SK-N-SH (cell line): ENCODE measurements at regions of chr20 and their contacts with region 1.

Region 1: DNA sequence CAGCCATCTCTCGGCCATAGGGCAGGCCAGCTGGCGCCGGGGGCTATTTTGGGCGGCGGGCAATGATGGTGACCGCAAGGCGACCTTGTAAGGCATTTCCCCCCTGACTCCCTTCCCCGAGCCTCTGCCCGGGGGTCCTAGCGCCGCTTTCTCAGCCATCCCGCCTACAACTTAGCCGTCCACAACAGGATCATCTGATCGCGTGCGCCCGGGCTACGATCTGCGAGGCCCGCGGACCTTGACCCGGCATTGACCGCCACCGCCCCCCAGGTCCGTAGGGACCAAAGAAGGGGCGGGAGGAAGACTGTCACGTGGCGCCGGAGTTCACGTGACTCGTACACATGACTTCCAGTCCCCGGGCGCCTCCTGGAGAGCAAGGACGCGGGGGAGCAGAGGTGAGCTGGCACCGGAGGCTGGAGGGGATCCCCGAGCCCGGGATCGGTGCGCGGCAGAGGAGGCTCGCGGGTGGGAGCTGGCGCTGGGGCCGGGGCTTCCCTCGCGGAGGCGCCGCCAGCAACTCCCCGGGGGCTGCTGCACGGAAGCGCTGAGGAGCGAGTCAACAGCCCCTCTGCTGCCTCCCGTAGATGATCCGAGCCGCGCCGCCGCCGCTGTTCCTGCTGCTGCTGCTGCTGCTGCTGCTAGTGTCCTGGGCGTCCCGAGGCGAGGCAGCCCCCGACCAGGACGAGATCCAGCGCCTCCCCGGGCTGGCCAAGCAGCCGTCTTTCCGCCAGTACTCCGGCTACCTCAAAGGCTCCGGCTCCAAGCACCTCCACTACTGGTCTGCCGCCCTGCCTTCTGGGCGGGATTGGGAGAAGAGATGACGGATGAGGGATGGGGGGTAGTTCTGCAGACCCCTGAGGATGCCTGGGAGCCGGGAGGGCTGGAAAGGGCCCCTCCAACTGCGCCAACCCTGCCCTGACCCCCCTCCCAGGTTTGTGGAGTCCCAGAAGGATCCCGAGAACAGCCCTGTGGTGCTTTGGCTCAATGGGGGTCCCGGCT is at the starts of genes CTSA and NEURL2:
- DNase-seq: peak; percentile 99
- H3K4me3 ChIP-seq: peak within 1 kb of the TSS; percentile 78 to 90
- H3K27ac ChIP-seq: peak within 1 kb of the TSS; percentile 58 to 89
- H3K4me1 ChIP-seq: peaks cover 0 to 9% of the 10 kb centered on the region in 2 experiments; a peak in 2 of 4 replicates
- H3K27me3 ChIP-seq: no peaks in the 10 kb centered on the region
- CTCF ChIP-seq: no peak
- EP300 ChIP-seq: no peak
- RAD21 ChIP-seq: no peak
- polyA plus RNA-seq, gene CTSA: 338 and 363 TPM in 2 replicates
- polyA plus RNA-seq, gene NEURL2: 3.5 and 4.7 TPM in 2 replicates

Region 2: DNA sequence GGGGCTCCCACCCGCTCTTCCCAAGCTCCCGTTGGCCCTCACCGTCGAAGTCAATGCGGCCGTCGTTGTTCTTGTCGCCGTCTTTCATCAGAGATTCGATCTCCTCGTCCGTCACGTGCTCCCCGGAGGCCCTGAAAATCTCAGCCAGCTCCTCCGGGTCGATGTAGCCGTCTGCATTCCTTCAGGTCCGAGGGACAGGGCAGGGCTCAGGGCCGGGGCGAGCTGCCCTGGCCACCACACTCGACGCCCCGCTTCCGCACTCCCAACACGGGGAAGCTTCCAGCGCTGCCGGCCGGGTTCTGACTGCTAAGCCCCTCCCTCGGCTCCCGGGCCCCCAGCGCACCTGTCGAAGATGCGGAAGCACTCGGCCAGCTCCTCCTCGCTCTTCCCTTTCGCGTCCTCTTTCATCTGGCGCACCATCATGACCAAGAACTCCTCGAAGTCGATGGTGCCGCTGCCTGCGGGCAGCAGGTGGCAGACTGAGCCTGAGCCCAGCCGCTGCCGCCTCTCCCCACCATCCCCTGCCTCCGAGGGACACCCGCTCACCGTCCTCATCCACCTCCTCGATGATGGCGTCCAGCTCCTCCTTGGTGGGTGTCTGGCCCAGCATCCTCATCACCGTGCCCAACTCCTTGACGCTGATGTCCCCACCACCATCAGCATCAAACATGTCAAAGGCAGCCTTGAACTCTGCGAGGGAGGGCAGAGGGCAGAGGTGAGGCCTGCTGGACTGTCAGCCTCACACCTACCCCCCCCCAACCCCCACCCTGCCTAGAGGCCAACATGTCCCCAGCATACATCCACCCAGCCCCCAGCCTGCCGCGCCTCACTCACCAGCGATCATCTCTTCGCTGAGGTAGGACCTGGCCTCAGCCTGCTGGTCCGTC is 67.1 kb before region 1 on chr20:
- CTCF ChIA-PET with region 1: interaction called, 10 read pairs
- POLR2A ChIA-PET with region 1: no interaction called
- DNase-seq: peak; percentile 62
- H3K4me3 ChIP-seq: no peak overlapping the region
- H3K27ac ChIP-seq: no peak overlapping the region
- H3K4me1 ChIP-seq: peaks cover 0 to 8% of the 10 kb centered on the region in 2 experiments; a peak in 2 of 4 replicates
- H3K27me3 ChIP-seq: no peaks in the 10 kb centered on the region
- CTCF ChIP-seq: no peak; the same call in 1 of the 2 replicates
- EP300 ChIP-seq: no peak
- RAD21 ChIP-seq: peak; percentile 52

Region 3: DNA sequence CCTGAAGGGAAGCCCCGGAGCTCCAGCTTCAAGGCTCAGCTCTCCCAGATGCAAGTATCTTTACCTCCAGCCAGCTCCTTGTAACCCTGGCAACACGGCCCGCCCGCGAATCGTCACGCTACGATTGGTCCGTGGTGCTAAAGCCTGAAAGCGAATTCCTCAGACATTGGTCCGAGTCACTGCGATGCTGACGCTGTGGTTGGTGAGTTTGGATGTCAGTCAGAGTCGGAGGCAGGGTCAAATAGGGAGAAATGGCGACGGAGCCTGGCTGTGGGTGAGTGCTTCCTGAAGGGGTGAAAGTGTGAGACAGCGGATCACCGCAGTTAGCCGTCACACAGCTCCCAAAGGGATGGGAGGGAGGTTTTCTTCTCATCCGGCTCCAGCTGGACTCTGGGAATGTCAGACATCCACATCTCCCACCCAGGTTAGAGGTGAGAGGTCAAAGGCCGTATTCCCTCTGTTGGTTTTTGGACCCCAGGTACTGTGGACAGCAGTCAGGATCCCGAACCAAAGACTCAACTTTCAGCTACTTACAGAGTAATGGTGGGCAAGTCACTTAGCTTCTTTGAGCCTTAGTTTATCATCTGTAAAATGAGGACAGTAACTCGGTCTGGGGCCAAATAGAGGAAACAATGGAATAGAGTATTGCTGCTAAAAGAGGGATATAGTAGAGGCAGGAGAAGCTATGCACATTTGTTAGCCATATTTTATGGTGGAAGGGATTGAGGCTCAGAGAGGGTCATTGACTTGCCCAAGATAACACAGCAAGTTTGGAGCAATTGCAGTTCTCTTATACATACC is 10.1 kb before region 1 on chr20 and contains the start of gene ZSWIM1:
- CTCF ChIA-PET with region 1: interaction called, 24 read pairs
- POLR2A ChIA-PET with region 1: interaction called, 26 read pairs
- DNase-seq: peak; percentile 97
- H3K4me3 ChIP-seq: peak within 1 kb of the TSS; percentile 65 to 76
- H3K27ac ChIP-seq: peak within 1 kb of the TSS; percentile 34 to 65; a peak in 3 of 4 replicates
- H3K4me1 ChIP-seq: peaks cover 3 to 10% of the 10 kb centered on the region in 2 experiments; a peak in 2 of 4 replicates
- H3K27me3 ChIP-seq: no peaks in the 10 kb centered on the region
- CTCF ChIP-seq: no peak
- EP300 ChIP-seq: no peak
- RAD21 ChIP-seq: no peak
- polyA plus RNA-seq, gene ZSWIM1: 1.8 and 2.8 TPM in 2 replicates

Region 4: DNA sequence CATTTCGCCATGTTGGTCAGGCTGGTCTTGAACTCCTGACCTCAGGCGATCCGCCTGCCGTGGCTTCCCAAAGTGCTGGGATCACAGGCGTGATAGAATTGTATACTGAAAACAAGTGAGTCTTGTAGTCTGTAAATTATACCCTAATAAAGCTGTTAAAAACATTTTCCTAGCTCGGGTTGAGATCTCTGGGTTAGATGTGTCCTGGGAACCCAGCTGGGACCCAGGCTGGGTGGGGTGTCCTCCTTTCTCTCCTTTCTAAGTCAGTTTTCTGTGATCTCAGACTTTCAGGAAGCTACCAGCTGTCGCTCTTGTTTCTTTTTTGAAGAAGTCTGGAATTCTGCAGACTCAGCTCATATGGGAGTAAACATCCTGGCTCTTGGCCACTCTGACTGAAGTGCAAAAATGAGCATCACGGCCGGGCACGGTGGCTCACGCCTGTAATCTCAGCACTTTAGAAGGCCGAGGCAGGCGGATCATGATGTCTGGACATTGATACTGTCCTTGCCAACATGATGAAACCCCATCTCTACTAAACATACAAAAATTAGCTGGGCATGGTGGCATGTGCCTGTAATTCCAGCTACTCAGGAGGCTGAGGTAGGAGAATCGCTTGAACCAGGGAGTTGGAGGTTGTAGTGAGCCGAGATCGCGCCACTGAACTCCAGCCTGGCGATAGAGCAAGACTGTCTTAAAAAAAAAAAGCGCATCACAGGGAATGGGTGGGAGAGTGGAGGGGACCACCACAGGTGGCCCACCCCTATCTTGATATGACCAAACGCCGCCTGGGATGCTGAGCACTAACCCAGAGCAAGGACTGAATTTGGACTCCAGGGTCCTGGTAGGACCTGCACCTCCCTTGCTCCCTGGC is 33.3 kb after region 1 on chr20:
- CTCF ChIA-PET with region 1: interaction called, 10 read pairs
- POLR2A ChIA-PET with region 1: interaction called, 3 read pairs
- DNase-seq: no peak
- H3K4me3 ChIP-seq: no peak overlapping the region
- H3K27ac ChIP-seq: no peak overlapping the region
- H3K4me1 ChIP-seq: peaks cover 0 to 8% of the 10 kb centered on the region in 2 experiments; a peak in 1 of 4 replicates
- H3K27me3 ChIP-seq: no peaks in the 10 kb centered on the region
- CTCF ChIP-seq: no peak
- EP300 ChIP-seq: no peak
- RAD21 ChIP-seq: no peak

Region 5: GRCh38 chr20:45963059-45964005 is 72.0 kb after region 1 on chr20:
- CTCF ChIA-PET with region 1: interaction called, 41 read pairs
- POLR2A ChIA-PET with region 1: no interaction called
- DNase-seq: peak; percentile 56
- H3K4me3 ChIP-seq: no peak overlapping the region
- H3K27ac ChIP-seq: no peak overlapping the region
- H3K4me1 ChIP-seq: no peaks in the 10 kb centered on the region
- H3K27me3 ChIP-seq: no peaks in the 10 kb centered on the region
- CTCF ChIP-seq: peak; percentile 54
- EP300 ChIP-seq: no peak
- RAD21 ChIP-seq: peak; percentile 58